Mammary epithelial cell (primary cell): ENCODE measurements at regions of chr6 and their contacts with region 1.

Region 1: DNA sequence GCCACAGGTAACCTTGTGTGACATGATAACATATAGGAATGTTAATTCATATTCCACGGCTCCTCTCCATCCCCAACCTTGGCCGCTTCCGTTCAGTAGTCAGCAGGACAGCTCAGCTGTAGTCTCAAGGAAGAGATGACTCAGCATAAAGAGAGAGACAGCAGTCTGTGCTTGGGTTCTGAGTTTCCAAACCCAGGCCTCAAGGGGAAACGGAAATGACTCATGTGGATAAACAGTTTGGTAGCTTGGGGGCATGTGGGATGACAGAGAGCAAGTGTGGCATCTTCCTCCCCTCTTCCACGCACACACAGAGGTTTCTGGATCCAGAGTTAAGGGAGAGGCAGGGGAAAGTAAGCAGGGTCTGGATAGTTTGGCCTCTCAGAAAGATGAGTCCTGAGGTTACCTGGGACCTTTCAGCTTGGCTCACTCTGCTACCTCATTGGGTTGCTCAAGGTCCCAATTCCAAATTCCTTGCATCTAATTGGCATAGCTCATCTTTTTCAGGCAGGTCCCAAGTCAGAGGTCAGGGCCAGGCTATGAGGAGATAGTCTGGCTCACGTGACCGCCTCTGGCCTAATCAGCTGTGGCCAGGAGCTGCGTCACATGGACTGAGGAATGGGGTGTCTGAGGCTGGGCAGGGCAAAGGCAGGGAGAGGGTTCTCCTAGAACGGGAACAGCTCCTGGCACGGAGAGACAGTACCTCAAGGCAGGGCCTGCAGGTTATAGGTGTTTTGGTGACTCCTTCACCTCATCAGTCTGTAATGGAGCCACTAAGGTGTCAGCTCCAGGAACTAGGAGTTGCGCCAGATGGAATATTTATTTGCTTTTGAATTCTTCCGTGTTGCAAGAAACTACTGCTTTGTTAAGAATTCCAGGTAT is 36.5 kb upstream of the MLN start:
- DNase-seq: peak; percentile 97
- H3K4me3 ChIP-seq: no peak overlapping the region
- H3K27ac ChIP-seq: peak overlapping the region; percentile 80
- H3K4me1 ChIP-seq: peaks cover 44% of the 10 kb centered on the region
- H3K27me3 ChIP-seq: no peaks in the 10 kb centered on the region
- CTCF ChIP-seq: no peak

Region 2: DNA sequence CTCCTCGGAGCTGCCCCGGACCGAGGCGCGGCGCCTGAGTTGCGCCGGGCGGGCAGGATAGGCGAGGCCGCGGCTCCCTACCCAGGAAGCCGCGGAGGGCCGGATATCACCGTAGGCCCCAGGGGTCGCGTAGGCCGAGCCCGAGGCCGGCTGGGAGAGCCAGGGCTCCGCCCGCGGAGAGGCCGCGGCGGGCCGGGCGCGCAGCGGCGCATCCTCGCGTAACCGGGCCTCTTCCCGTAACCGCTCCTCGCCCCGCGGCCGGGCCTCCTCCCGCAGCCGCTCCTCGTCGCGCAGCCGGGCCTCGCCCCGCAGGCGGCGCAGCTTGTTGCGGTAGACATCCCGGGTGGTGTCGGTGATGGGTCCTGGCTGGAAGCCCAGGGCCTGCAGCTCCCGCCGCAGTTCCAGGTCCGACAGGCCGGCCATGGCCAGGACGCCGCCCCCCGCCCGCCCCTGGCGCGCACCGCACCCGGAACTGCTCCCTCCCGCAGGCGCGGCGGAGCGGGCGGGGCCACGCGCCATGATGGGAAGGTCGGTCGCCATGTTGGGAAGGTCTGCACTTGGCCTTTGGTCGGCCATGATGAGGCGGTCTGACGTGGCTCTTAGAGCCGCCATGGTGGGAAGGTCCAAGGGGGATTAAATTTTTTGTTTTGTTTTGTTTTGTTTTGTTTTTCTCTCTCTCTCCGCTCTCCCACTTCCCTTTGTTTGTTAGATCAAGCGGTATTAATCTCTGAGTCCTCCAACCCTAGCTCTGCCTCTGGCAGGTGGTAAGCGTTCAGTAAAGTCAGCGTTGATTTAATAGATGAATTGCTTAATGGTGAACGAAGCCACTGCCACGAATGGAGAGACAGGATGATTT is 51.4 kb before region 1 on chr6 and contains the start of gene LEMD2:
- CTCF ChIA-PET with region 1: no interaction called
- dilution Hi-C with region 1: no loop called
- in situ Hi-C with region 1: no loop called
- intact Hi-C with region 1: loop called (anchors 1 kb)
- DNase-seq: peak; percentile 88
- H3K4me3 ChIP-seq: peak within 1 kb of the TSS; percentile 71 to 79 (median 76)
- H3K27ac ChIP-seq: peak within 1 kb of the TSS; percentile 73
- H3K4me1 ChIP-seq: peaks cover 25% of the 10 kb centered on the region
- H3K27me3 ChIP-seq: no peaks in the 10 kb centered on the region
- CTCF ChIP-seq: no peak
- total RNA-seq, gene LEMD2: 47.5 to 63.2 TPM

Region 3: GRCh38 chr6:34015586-34015985 is 175.3 kb after region 1 on chr6:
- CTCF ChIA-PET with region 1: no interaction called
- dilution Hi-C with region 1: no loop called
- in situ Hi-C with region 1: no loop called
- intact Hi-C with region 1: no loop called
- DNase-seq: no peak
- H3K4me3 ChIP-seq: no peak overlapping the region
- H3K27ac ChIP-seq: no peak overlapping the region
- H3K4me1 ChIP-seq: no peaks in the 10 kb centered on the region
- H3K27me3 ChIP-seq: no peaks in the 10 kb centered on the region
- CTCF ChIP-seq: no peak